CD4-positive, alpha-beta T cell (primary cell): ENCODE measurements at regions of chr11 and their contacts with region 1.

Region 1: DNA sequence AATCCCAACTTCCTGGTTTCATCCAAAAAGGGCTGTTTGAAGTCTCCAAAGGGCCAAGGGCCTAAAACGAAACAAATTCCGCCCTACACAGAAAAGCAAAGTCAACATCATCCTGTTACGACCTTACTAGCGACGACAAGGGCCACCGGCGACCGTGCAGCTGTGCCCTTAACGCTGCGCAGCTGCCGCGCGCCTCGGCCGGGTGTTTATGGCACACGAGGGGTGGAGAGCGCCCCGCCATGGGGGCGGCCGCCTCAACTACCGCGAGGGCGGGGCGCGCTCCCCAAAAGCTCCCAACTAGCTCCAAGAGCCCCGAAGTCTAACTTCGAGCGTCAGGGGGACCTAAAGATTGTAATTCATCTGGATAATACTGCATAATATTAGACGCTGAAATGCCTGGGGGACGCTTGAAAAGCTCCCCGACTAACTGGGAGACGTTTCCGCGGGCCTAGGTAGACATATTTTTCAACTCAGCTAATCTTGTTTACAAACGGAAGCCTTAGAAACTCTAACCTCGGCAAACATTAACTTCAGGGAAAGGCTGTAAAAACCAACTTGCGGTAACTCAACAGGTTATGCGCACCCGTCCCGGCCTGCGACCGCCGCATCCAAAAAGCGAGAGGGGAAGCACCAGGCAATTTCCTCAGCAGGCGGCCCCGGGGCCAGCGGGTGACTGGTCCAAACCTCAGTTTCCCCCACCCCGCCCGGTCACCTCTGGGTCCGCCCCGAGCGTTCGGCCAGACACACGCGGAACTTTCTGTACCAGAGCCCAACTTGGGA is 694 bp downstream of the TMEM123 start:
- DNase-seq: peak; percentile 67 to 91 (median 78)
- ATAC-seq: peak; percentile 61
- H3K4me3 ChIP-seq: peak overlapping the region; percentile 93
- H3K4me3 Mint-ChIP-seq: peak overlapping the region; percentile 99
- H3K27ac ChIP-seq: peak overlapping the region; percentile 65 to 90
- H3K27ac Mint-ChIP-seq: peak overlapping the region; percentile 96
- H3K4me1 ChIP-seq: peaks cover 53% of the 10 kb centered on the region
- H3K4me1 Mint-ChIP-seq: peaks cover 84% of the 10 kb centered on the region
- H3K27me3 ChIP-seq: no peaks in the 10 kb centered on the region
- H3K27me3 Mint-ChIP-seq: no peaks in the 10 kb centered on the region
- CTCF ChIP-seq: no peak

Region 2: GRCh38 chr11:102346748-102347461 is 105.0 kb before region 1 on chr11 and contains the start of gene BIRC2:
- CTCF ChIA-PET with region 1: interaction called, 6 read pairs
- POLR2A ChIA-PET with region 1: interaction called, 7 read pairs
- intact Hi-C with region 1: loop called (anchors 1 to 2 kb)
- DNase-seq: peak; percentile 91 to 98 (median 94)
- ATAC-seq: peak; percentile 81
- H3K4me3 ChIP-seq: peak within 1 kb of the TSS; percentile 65
- H3K4me3 Mint-ChIP-seq: peak within 1 kb of the TSS; percentile 98
- H3K27ac ChIP-seq: peak within 1 kb of the TSS; percentile 95 to 96
- H3K27ac Mint-ChIP-seq: peak within 1 kb of the TSS; percentile 100
- H3K4me1 ChIP-seq: peaks cover 7% of the 10 kb centered on the region
- H3K4me1 Mint-ChIP-seq: peaks cover 44% of the 10 kb centered on the region
- H3K27me3 ChIP-seq: no peaks in the 10 kb centered on the region
- H3K27me3 Mint-ChIP-seq: no peaks in the 10 kb centered on the region
- CTCF ChIP-seq: peak; percentile 72
- total RNA-seq, gene BIRC2: 107 to 109 TPM

Region 3: DNA sequence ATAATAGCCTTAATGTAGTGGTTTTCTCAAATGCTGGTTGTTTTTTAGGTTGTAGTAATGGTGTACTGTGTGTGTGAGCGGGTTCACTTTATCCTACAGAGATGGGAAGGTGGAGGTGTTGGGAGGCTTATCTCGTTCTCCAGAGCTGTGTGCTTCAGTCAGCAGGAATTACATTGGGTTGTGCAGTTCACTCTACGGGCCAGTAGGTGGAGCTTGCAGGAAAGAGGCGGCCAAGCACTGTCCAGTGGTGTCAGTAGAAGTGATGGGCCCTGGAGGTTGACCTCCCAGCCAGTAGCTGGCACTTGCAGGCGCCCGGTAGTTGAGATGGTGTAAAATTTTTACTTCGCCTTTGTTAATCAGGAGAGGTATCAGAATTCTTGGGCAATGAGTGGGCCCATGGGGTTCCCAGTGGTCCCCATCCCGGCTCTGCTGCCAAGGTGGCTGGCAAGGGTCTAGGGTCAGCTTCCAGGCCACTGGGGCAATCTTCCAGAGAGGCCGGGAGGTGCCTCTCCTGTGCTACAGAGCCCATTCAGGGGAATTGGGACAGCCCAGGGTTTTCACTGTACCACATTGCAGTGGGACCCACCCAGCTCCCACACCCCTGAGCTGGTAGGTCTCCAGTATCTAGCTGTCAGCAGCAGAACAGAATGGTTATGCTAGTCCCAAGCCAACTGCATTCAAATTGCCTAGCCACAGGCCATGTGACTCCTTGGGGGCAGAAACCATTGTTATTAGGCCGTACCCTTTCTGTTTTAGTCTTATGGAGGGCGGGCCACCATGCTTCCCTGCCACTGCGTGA is 61.0 kb before region 1 on chr11:
- CTCF ChIA-PET with region 1: interaction called, 16 read pairs
- POLR2A ChIA-PET with region 1: interaction called, 39 read pairs
- intact Hi-C with region 1: loop called (anchors 2 kb)
- DNase-seq: peak in 13 of 14 experiments; percentile 32 to 79 (median 45)
- ATAC-seq: peak; percentile 76
- H3K4me3 ChIP-seq: no peak overlapping the region
- H3K4me3 Mint-ChIP-seq: no peak overlapping the region
- H3K27ac ChIP-seq: peak overlapping the region in 1 of 2 donors; percentile 7
- H3K27ac Mint-ChIP-seq: peak overlapping the region; percentile 37
- H3K4me1 ChIP-seq: peaks cover 23% of the 10 kb centered on the region
- H3K4me1 Mint-ChIP-seq: peaks cover 52% of the 10 kb centered on the region
- H3K27me3 ChIP-seq: no peaks in the 10 kb centered on the region
- H3K27me3 Mint-ChIP-seq: no peaks in the 10 kb centered on the region
- CTCF ChIP-seq: peak; percentile 90

Region 4: GRCh38 chr11:102420547-102420946 is 31.3 kb before region 1 on chr11:
- CTCF ChIA-PET with region 1: interaction called, 5 read pairs
- POLR2A ChIA-PET with region 1: interaction called, 16 read pairs
- intact Hi-C with region 1: loop called (anchors 2 kb)
- DNase-seq: no peak
- ATAC-seq: no peak
- H3K4me3 ChIP-seq: no peak overlapping the region
- H3K4me3 Mint-ChIP-seq: peak overlapping the region; percentile 16
- H3K27ac ChIP-seq: peak overlapping the region; percentile 11 to 24
- H3K27ac Mint-ChIP-seq: peak overlapping the region; percentile 81
- H3K4me1 ChIP-seq: peaks cover 62% of the 10 kb centered on the region
- H3K4me1 Mint-ChIP-seq: peaks cover 100% of the 10 kb centered on the region
- H3K27me3 ChIP-seq: no peaks in the 10 kb centered on the region
- H3K27me3 Mint-ChIP-seq: no peaks in the 10 kb centered on the region
- CTCF ChIP-seq: no peak

Region 5: DNA sequence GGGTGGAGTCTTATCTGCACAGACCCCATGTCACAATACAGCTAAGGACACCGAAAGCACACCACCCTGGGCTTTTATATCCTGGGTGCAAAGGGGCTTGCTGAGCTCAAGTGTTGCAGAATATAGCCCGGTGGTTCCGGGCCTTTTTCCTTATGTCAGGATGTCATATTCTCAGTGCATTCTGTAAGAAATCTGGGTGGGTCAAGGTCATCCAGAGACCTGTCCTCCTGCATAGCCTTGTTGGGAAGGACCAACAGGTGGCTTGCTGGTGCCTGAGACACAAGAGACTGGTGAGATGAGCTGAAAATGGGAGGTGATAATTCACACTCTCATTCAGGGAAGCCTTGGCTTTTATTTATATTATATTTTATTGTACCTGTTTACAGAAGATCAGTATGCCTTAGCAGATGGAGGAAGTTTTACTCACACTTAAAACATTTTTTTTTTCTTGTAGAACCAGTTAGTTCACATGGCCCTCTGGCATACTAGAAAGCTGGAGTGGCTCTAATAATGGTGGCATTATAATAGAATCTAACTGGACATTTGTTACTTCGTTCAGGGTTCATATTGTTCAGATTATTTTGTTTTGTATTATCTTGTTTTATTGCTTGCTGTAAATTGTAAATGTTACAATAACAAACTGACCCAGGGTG is 15.3 kb after region 1 on chr11:
- CTCF ChIA-PET with region 1: interaction called, 5 read pairs
- POLR2A ChIA-PET with region 1: interaction called, 12 read pairs
- intact Hi-C with region 1: loop called (anchors 1 to 2 kb)
- DNase-seq: no peak
- ATAC-seq: no peak
- H3K4me3 ChIP-seq: no peak overlapping the region
- H3K4me3 Mint-ChIP-seq: peak overlapping the region; percentile 50
- H3K27ac ChIP-seq: no peak overlapping the region
- H3K27ac Mint-ChIP-seq: peak overlapping the region; percentile 11
- H3K4me1 ChIP-seq: peaks cover 52% of the 10 kb centered on the region
- H3K4me1 Mint-ChIP-seq: peaks cover 90% of the 10 kb centered on the region
- H3K27me3 ChIP-seq: no peaks in the 10 kb centered on the region
- H3K27me3 Mint-ChIP-seq: no peaks in the 10 kb centered on the region
- CTCF ChIP-seq: no peak

Region 6: GRCh38 chr11:102933627-102934026 is 481.8 kb after region 1 on chr11:
- CTCF ChIA-PET with region 1: no interaction called
- POLR2A ChIA-PET with region 1: no interaction called
- intact Hi-C with region 1: no loop called
- DNase-seq: no peak
- ATAC-seq: no peak
- H3K4me3 ChIP-seq: no peak overlapping the region
- H3K4me3 Mint-ChIP-seq: no peak overlapping the region
- H3K27ac ChIP-seq: no peak overlapping the region
- H3K27ac Mint-ChIP-seq: no peak overlapping the region
- H3K4me1 ChIP-seq: no peaks in the 10 kb centered on the region
- H3K4me1 Mint-ChIP-seq: no peaks in the 10 kb centered on the region
- H3K27me3 ChIP-seq: peaks cover 3 to 4% of the 10 kb centered on the region in 2 experiments
- H3K27me3 Mint-ChIP-seq: peaks cover 25% of the 10 kb centered on the region
- CTCF ChIP-seq: no peak